AG04450 (cell line): ENCODE measurements at regions of chr11 and their contacts with region 1.

Region 1: DNA sequence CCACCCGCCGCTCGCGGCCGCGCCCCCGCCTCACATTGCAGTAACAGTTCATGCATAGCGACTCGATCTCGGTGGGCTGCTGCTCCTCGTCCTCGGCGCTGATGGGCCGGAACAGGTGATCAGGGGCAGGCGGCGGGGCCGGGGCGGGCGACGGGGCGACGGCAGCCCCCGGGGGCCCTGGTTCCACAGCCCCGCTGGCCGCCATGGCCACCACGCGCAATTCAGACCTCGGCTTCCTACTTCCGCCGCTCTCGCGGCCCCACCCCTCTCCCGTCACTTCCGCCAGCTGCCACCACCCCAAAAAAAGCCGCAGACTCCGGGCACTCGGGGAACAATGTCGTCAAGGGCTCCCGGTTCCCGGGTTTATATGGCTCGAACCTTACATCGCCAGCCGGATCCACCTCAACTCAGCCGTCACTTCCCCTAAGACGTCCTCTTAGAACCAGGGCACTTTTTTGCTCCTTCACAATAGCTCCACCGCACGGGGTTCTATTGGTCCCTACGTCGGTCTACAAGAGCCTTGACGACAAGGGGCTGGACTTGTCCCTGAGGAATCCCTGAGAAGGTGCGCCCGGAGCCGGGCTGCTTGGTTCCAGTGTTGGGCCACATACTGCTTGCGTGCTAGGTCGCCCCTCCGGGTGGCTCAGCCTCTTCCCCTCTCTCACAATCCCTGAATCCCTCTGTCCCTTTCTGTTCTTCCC is at the start of gene ZPR1:
- DNase-seq: no peak
- H3K4me3 ChIP-seq: peak within 1 kb of the TSS; percentile 89
- H3K27ac ChIP-seq: peak within 1 kb of the TSS; percentile 65
- H3K27me3 ChIP-seq: no peaks in the 10 kb centered on the region
- CTCF ChIP-seq: peak; percentile 7; the same call in 1 of the 2 replicates
- polyA plus RNA-seq, gene ZPR1: 57.1 and 57.7 TPM in 2 replicates

Region 2: DNA sequence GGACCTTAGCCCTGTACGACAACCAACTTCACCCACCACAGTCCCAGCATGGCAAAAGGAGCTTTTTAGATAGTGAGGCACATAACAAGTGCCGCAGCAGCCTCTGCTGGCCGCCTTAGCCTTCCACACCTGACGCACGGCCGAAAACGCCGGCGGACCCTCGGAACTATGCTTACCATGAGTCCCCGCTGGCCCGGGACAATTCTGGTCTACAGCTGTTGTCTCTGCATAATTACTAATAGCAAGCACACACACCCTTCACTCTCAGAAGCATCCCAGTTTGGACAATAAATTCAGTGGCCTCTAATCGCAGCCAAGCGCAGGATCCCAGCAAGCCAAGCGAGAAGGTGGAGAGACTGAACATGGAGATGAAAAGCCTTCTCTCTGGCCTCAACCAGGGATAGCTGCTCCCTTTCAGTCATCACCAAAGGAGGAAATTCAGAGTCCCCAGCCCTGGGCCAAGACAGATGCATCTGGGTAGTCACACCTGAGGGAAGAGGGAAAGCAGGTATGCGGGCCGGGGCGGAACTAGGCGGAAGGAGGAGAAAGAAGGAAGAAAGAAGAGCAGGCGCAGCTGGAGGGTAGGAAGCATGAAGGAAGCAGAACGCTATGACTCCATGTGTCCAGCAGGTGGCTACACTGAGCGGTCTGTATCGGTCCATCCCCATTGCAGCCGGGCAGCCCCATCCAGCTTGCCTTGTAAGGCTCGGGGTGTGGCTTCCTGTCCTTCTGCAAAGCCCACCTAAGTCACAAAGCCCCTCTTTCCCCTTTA is 55.5 kb before region 1 on chr11:
- CTCF ChIA-PET with region 1: interaction called, 10 read pairs
- POLR2A ChIA-PET with region 1: no interaction called
- DNase-seq: peak; percentile 26
- H3K4me3 ChIP-seq: no peak overlapping the region
- H3K27ac ChIP-seq: no peak overlapping the region
- H3K27me3 ChIP-seq: peaks cover 41% of the 10 kb centered on the region
- CTCF ChIP-seq: peak; percentile 89

Region 3: GRCh38 chr11:116813781-116814471 is 26.0 kb after region 1 on chr11:
- CTCF ChIA-PET with region 1: interaction called, 12 read pairs
- POLR2A ChIA-PET with region 1: no interaction called
- DNase-seq: no peak
- H3K4me3 ChIP-seq: no peak overlapping the region
- H3K27ac ChIP-seq: no peak overlapping the region
- H3K27me3 ChIP-seq: peaks cover 7% of the 10 kb centered on the region
- CTCF ChIP-seq: no peak

Region 4: DNA sequence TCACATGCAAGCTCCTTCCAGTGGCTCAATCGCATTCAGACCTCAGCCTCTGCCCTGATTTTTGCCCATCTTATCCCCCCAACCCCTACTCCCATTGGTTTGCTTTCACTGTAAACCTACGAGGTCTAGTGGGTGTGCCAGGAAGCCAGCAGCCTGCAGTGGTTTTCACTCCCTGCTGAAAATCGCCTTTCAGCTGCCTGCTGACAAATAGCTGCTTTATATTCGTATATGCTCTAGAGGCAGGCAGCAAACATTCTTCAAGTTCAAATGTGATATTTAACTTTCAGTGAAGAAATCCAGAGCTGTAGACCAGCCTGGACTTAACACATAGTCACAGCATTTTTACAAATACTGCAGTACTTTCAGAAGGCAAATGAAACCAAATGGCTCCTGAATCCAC is 142.2 kb after region 1 on chr11:
- CTCF ChIA-PET with region 1: no interaction called
- POLR2A ChIA-PET with region 1: no interaction called
- DNase-seq: no peak
- H3K4me3 ChIP-seq: peak overlapping the region; percentile 15; the same call in 1 of the 2 replicates
- H3K27ac ChIP-seq: peak overlapping the region; percentile 48
- H3K27me3 ChIP-seq: no peaks in the 10 kb centered on the region
- CTCF ChIP-seq: no peak

Region 5: GRCh38 chr11:117098269-117099232 is 310.6 kb after region 1 on chr11 and contains the start of gene SIK3:
- CTCF ChIA-PET with region 1: interaction called, 209 read pairs
- POLR2A ChIA-PET with region 1: no interaction called
- DNase-seq: peak; percentile 83
- H3K4me3 ChIP-seq: peak within 1 kb of the TSS; percentile 78
- H3K27ac ChIP-seq: peak within 1 kb of the TSS; percentile 91
- H3K27me3 ChIP-seq: no peaks in the 10 kb centered on the region
- CTCF ChIP-seq: peak; percentile 67
- polyA plus RNA-seq, gene SIK3: 9.0 and 12.6 TPM in 2 replicates

Region 6: DNA sequence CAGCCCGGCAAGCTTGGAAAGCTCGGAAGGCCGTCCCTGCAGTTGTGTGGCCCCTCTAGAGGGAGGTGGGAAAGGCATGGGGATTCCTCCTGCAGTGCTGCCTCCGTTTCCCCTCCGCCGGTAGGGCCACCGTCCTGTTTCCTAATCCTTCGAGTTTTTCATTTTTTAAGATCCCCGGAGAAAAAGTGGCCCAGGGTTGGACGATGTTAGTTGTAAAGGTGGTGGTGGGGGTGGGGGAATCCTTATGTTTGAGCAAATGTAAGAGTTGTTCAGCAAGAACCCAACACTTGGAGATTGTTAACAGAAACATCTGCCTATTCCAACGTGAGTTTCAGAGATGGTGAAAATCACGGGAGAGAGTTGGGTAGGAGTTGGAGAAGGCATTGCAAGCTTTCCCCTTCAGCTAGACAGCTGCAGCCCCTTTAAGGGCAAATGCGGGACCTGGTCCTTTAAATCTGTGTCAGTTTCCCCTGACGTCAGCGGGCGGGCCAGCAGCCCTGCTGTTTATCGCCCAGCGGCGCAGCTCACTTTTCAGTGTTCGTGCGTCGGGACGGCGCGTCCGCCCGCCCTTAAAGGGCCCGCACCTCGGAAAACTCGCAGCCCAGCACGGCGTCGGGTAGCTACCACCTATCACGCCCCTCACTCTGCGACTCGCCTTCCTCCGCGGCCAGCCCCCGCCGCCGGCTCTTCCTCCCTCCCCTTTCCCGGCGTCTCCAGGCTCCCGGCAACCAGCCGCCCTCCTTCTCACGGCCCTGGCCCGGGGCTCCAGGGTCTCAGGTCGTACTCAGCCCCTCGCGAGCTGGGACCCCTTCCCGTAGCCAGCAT is 390.5 kb after region 1 on chr11 and contains the start of gene SIDT2:
- CTCF ChIA-PET with region 1: interaction called, 10 read pairs
- POLR2A ChIA-PET with region 1: interaction called, 3 read pairs
- DNase-seq: peak; percentile 86
- H3K4me3 ChIP-seq: peak within 1 kb of the TSS; percentile 76
- H3K27ac ChIP-seq: peak within 1 kb of the TSS; percentile 65
- H3K27me3 ChIP-seq: no peaks in the 10 kb centered on the region
- CTCF ChIP-seq: no peak
- polyA plus RNA-seq, gene SIDT2: 32.5 and 45.0 TPM in 2 replicates

Region 7: DNA sequence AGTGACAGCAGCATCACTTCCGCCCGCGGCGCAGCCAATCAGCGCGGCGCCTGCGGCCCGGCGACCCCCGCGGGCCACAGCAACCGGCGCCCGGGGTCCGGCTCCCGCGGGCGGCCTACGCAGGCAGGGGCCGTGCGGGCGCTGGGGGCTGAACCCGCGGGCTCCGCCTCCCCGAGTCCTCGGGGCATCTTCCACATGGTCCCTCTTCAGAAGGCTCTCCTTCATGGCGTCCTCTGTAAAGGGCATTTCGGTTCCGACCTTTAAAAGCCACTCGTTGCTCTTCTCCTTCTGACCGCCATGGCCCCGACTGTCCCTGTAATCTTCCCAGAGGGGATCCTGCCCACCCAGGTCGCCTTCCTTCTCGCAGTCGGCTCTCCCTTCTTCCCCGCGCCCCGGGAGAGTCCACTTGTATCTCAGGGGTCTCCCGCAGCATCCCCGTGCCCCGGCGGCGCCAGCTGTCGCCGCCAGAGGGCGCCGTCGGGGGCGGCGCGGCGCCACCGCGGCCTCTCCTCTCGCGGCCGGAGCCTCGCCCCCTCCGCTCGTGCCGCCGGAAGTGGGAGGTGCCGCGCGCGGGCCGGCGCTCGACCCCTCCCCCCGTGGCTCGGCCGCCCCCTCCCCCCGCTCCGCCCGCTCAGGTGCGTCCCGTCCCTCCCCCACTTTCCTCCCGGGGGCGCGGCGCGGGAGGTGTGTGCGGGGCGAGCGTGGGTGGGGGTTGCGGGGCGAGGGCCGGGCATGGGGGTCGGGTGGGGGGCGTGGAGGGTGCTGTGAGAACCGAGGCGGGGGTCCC is 444.3 kb after region 1 on chr11 and contains the start of gene RNF214:
- CTCF ChIA-PET with region 1: interaction called, 12 read pairs
- POLR2A ChIA-PET with region 1: interaction called, 11 read pairs
- DNase-seq: no peak
- H3K4me3 ChIP-seq: peak within 1 kb of the TSS; percentile 96
- H3K27ac ChIP-seq: peak within 1 kb of the TSS; percentile 86
- H3K27me3 ChIP-seq: no peaks in the 10 kb centered on the region
- CTCF ChIP-seq: peak; percentile 64
- polyA plus RNA-seq, gene RNF214: 15.1 and 15.2 TPM in 2 replicates